Naive thymus-derived CD8-positive, alpha-beta T cell (primary cell): ENCODE measurements at regions of chr3 and their contacts with region 1.

Region 1: DNA sequence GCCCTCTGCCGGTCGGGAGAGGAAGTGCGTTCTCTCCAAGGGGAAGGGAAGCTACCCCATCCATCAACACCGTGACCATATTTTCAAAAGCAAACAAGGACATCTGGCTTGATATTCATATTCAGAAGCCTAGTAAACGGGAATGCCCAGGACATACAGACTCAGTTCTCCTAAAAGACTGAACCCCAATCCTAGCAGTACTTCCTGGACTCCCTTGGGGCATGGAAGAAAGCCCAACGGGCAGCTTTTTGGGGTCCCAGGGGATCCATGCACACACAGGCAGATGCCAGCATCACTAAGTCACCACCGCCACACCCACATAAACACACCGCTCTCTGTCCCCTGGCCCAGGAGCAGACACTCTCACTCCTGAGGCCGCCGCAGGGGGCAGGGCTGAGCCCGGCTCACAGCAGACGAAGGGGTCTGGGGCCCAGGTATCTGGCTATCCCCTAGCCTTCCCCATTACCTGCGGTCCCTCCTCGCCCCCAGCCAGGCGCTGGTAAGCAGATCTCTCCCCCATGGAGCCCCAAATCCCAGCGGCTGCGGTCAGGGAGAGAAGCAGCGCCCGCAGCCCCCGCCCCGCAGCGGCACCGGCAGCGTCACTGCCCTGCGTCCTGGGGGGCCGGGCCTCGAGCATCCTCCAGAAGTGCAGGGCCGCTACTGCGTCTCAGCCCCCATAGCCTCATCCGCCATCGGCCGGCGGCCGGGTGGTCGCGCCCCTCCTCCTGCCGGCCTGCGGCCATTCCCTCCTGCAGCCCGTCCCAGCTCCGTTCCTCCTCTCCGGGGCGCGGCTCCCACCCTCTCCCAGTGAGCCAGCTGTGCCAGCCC is 13.4 kb downstream of the TNK2 start:
- DNase-seq: peak; percentile 53 to 79 (median 61)
- ATAC-seq: peak; percentile 68 to 76
- H3K4me3 Mint-ChIP-seq: peak overlapping the region; percentile 86 to 94 (median 92)
- H3K27ac Mint-ChIP-seq: peak overlapping the region; percentile 79 to 97 (median 94)
- H3K4me1 Mint-ChIP-seq: peaks cover 29 to 60% (median 49%) of the 10 kb centered on the region in 4 donors
- H3K27me3 Mint-ChIP-seq: no peaks in the 10 kb centered on the region

Region 2: DNA sequence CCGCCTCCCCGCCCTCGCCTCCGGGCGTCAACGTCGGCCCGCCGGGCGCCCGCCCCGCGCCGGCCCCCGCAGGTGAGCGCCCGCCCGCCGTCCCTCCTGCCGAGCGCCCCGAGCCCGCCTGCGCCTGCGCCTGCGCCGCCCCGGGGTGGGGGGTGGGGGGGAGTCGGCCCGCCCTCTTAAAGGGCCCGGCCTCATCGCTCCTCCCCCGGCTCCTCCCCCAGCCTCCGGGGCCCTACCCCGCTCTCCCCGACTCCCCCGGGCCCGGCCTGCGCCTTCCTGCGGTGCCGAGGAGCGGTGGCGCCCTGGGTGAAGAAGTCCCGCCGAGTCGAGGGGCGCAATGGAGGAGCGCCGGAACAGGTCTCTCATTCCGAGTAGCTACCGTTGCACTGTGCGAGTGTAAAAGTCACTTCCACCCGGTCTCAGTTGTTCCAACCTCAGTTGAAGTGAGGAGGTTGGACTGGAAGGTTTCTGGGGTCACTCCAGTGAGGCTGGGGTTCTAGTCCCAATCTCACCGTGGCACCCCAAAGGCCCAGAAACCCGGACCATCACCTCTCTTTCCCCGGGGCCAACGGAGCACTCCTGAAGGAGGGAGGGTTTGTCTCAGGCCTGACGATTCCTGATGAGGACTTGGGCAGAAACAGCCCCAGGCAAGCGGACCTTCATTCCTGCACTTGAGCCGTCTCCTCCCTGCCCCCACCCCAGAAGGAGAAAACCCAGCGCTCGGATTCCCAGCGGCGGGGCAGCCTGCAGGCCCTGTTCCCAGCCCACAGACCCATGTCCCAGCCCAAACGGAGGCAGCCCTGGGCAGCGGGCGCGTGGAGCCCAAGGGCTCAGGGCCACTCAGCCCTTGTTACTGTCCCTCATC is 14.9 kb after region 1 on chr3:
- POLR2A ChIA-PET with region 1: interaction called, 241 read pairs
- DNase-seq: peak; percentile 79 to 94 (median 86)
- ATAC-seq: peak; percentile 55 to 58
- H3K4me3 Mint-ChIP-seq: peak overlapping the region; percentile 61 to 93 (median 74)
- H3K27ac Mint-ChIP-seq: peak overlapping the region in 8 of 10 donors; percentile 13 to 86 (median 76)
- H3K4me1 Mint-ChIP-seq: peaks cover 25 to 45% (median 37%) of the 10 kb centered on the region in 4 donors
- H3K27me3 Mint-ChIP-seq: no peaks in the 10 kb centered on the region

Region 3: GRCh38 chr3:196528639-196529233 is 633.7 kb after region 1 on chr3:
- POLR2A ChIA-PET with region 1: no interaction called
- DNase-seq: peak; percentile 22 to 77 (median 67)
- ATAC-seq: peak; percentile 97 to 98
- H3K4me3 Mint-ChIP-seq: peak overlapping the region in 9 of 10 donors; percentile 44 to 71 (median 66)
- H3K27ac Mint-ChIP-seq: peak overlapping the region in 3 of 10 donors; percentile 19 to 66 (median 47)
- H3K4me1 Mint-ChIP-seq: peaks cover 0 to 2% (median 1%) of the 10 kb centered on the region in 4 donors
- H3K27me3 Mint-ChIP-seq: peaks cover 0 to 29% (median 11%) of the 10 kb centered on the region in 5 donors